ENCODE measurements at regions of chr10 and their contacts with region 1.

Region 1: DNA sequence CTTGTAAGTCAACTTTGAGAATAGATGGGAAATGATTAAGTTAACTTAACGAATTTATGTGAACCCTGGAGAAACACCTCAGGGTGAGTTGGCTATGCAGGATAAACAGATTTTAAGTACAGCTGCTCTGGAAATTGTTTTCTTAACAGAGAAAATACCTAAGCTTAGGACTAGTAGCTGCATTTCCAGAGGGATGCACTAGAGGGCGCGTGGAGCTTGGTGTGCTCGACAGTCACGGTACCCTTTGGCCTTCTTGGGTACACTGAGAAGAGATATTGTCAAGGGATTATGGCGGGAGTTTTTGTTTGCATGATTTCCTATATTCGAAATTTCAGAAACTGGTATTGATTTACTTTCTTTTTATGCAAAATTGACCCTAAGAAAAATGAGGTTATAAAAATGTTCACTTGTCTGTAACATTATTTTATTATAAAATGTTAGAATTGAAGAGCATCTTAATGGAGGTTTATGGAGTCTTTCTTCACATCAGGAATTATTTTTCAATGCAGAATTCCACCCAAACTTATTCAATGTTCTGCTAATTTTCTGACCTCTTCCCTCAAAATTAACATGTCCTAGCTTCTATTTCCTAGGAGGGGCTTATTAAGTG is 58.4 kb upstream of the MYO3A start:
- DNase-seq: peak; percentile 84
- ATAC-seq: peak; percentile 58
- H3K4me3 Mint-ChIP-seq: no peak overlapping the region
- H3K27ac Mint-ChIP-seq: no peak overlapping the region
- H3K4me1 Mint-ChIP-seq: no peaks in the 10 kb centered on the region
- H3K27me3 Mint-ChIP-seq: peaks cover 2% of the 10 kb centered on the region

Region 2: GRCh38 chr10:25758041-25758457 is 117.6 kb before region 1 on chr10:
- CTCF ChIA-PET with region 1: interaction called, 10 read pairs
- POLR2A ChIA-PET with region 1: no interaction called
- intact Hi-C with region 1: no loop called
- DNase-seq: peak; percentile 18
- ATAC-seq: no peak
- H3K4me3 Mint-ChIP-seq: no peak overlapping the region
- H3K27ac Mint-ChIP-seq: no peak overlapping the region
- H3K4me1 Mint-ChIP-seq: no peaks in the 10 kb centered on the region
- H3K27me3 Mint-ChIP-seq: no peaks in the 10 kb centered on the region

Region 3: GRCh38 chr10:26269754-26270153 is 394.1 kb after region 1 on chr10:
- CTCF ChIA-PET with region 1: interaction called, 5 read pairs
- POLR2A ChIA-PET with region 1: no interaction called
- intact Hi-C with region 1: loop called (anchors 1 kb)
- DNase-seq: no peak
- ATAC-seq: no peak
- H3K4me3 Mint-ChIP-seq: no peak overlapping the region
- H3K27ac Mint-ChIP-seq: no peak overlapping the region
- H3K4me1 Mint-ChIP-seq: no peaks in the 10 kb centered on the region
- H3K27me3 Mint-ChIP-seq: peaks cover 7% of the 10 kb centered on the region

Region 4: DNA sequence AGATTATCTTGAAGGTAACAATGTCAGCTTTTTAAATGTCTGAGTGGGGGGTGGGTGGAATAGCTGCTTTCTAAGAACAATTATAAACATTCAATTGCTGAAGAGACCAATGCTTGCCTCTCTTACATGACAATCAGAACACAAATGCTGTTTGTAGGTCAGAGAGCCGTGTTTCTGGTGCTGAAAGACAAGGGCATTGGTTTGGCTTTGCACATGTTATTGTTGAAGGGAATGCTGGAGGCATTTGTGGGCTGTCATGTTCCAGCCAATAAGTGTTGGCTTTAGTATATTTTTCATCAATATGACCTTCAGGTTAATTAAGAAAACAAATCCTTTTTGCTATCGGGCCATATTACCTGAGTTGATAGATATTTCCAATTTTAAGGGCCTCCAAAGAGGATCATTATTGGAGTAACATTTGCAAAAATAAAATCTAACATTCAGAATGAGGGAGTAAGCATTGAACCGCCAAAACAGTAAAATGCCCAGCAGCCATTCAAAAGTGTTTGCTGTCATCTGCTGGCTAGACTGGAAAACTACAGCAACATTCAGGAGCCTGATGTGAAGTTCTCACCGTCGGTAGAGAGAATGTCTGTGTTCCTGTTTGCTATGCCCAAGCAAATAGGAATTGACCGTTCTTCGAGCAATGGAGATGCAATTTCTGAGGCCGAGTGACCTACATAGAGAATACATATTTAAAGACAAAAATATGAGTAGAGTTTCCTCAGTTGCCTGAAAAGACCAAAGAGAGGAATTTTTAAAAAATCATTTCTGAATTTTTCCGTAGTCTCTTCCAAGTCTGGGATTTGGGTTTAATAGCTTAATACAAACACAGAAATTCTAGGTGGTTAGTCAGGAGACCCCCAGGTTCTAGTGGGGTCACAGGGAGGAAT is 681.3 kb after region 1 on chr10:
- CTCF ChIA-PET with region 1: no interaction called
- POLR2A ChIA-PET with region 1: no interaction called
- intact Hi-C with region 1: loop called in 1 of 2 experiments (anchors 1 kb)
- DNase-seq: peak; percentile 44
- ATAC-seq: peak; percentile 53
- H3K4me3 Mint-ChIP-seq: no peak overlapping the region
- H3K27ac Mint-ChIP-seq: no peak overlapping the region
- H3K4me1 Mint-ChIP-seq: peaks cover 5% of the 10 kb centered on the region
- H3K27me3 Mint-ChIP-seq: no peaks in the 10 kb centered on the region